ENCODE measurements at regions of chr3 and their contacts with region 1.

Region 1: DNA sequence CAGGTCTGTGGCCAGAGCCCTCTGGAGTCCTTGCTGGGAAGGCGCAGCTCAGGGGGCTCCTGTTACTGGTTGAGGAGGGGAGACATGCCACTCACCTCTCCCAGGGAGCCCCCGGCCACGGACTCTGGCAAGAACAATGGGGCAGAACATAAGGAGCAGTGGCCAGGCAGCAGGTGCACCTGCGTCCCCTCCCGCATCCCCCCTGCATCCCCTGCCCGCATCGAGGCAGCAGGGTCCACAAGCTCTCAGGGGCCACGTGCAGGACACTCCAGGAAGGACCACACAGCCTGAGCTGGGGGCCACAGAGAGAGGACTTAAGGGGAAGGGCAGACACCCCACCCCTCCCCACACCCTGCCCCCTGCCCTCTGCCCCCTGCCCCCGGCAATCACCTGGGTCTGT is 73.0 kb downstream of the TFRC start:
- DNase-seq: no peak
- ATAC-seq: no peak

Region 2: GRCh38 chr3:195020921-195021320 is 988.0 kb before region 1 on chr3:
- intact Hi-C with region 1: loop called (anchors 5 kb)
- DNase-seq: peak; percentile 26
- ATAC-seq: no peak

Region 3: GRCh38 chr3:195790614-195791300 is 218.2 kb before region 1 on chr3:
- intact Hi-C with region 1: no loop called
- DNase-seq: no peak
- ATAC-seq: no peak